ENCODE measurements at regions of chr11 and their contacts with region 1.

Region 1: GRCh38 chr11:61061081-61061826 is 41.0 kb upstream of the CD5 start:
- DNase-seq: peak; percentile 97
- H3K4me3 Mint-ChIP-seq: peak overlapping the region; percentile 70
- H3K27ac Mint-ChIP-seq: peak overlapping the region; percentile 100
- H3K4me1 Mint-ChIP-seq: peaks cover 88% of the 10 kb centered on the region
- H3K27me3 Mint-ChIP-seq: no peaks in the 10 kb centered on the region

Region 2: GRCh38 chr11:60970369-60970774 is 90.9 kb before region 1 on chr11:
- CTCF ChIA-PET with region 1: interaction called, 5 read pairs
- intact Hi-C with region 1: loop called (anchors 1 kb)
- DNase-seq: peak; percentile 90
- H3K4me3 Mint-ChIP-seq: peak overlapping the region; percentile 89
- H3K27ac Mint-ChIP-seq: peak overlapping the region; percentile 97
- H3K4me1 Mint-ChIP-seq: peaks cover 15% of the 10 kb centered on the region
- H3K27me3 Mint-ChIP-seq: no peaks in the 10 kb centered on the region

Region 3: GRCh38 chr11:60992842-60993409 is 68.3 kb before region 1 on chr11:
- CTCF ChIA-PET with region 1: interaction called, 4 read pairs
- intact Hi-C with region 1: loop called (anchors 1 kb)
- DNase-seq: no peak
- H3K4me3 Mint-ChIP-seq: peak overlapping the region; percentile 74
- H3K27ac Mint-ChIP-seq: peak overlapping the region; percentile 98
- H3K4me1 Mint-ChIP-seq: peaks cover 81% of the 10 kb centered on the region
- H3K27me3 Mint-ChIP-seq: no peaks in the 10 kb centered on the region

Region 4: DNA sequence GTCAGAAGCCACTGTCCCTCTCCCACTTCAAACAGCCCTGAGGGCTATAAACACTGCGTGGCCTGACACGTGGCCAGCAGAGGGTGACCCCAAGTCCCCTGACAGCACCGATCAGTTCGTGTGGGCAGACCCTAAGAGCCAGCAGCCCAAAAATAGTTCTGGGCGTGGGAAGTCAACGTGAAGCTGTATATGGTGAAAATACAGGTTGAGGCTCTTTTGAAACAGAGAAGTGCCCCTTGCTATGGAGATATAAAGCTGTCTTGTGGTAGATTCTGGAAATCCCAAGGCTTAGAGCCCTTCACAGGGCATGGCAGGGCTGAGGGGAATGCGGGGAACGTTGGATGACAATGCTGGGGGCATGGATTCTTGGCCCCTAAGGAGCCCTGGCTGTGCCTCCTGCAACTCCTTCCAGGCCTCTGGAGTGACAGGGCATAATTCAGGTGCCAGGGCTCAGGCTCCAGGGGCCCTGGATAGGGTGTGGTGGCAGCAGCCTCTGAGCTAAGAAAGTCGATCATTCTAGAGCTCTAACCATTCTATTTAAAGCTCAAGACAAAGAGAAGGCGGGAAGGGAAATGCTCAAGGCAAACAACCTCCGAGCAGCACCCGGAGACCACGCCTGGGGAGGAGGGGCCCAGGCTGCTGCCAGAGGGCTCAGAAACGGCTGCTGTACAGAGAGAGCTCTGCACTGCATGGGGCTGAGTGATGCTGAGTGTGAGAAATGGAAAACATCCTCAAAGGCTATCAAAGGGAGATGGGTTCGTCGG is 19.3 kb before region 1 on chr11:
- CTCF ChIA-PET with region 1: interaction called, 5 read pairs
- intact Hi-C with region 1: loop called (anchors 1 kb)
- DNase-seq: peak; percentile 93
- H3K4me3 Mint-ChIP-seq: peak overlapping the region; percentile 44
- H3K27ac Mint-ChIP-seq: peak overlapping the region; percentile 97
- H3K4me1 Mint-ChIP-seq: peaks cover 70% of the 10 kb centered on the region
- H3K27me3 Mint-ChIP-seq: no peaks in the 10 kb centered on the region

Region 5: DNA sequence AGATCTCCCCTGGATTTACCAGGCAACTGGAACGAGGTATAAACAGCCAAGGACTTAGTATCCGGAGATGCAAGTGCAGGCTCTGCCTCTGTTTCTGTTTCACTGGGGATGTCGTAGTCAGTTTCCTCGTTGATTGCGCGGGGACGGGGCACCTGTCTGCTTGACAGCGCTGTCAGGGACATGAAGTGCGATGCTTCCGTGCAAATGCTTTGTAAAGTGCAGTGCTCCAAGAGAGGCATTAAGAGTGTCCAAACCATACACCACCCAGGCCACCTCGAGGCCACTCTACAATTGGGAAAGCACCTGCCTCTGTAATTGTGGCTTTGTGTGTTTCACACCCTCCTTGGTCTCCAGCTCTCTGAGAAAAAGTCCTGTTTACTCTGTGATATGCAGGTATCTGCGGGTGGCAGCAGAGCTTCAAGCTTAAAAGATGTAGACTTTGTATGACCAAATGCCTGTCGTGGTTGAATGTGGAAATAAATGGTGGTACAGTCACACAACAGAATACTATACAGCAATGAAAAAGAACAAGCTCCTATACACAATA is 22.4 kb after region 1 on chr11:
- CTCF ChIA-PET with region 1: interaction called, 21 read pairs
- intact Hi-C with region 1: loop called (anchors 1 kb)
- DNase-seq: peak; percentile 89
- H3K4me3 Mint-ChIP-seq: peak overlapping the region; percentile 76
- H3K27ac Mint-ChIP-seq: peak overlapping the region; percentile 99
- H3K4me1 Mint-ChIP-seq: peaks cover 70% of the 10 kb centered on the region
- H3K27me3 Mint-ChIP-seq: no peaks in the 10 kb centered on the region

Region 6: DNA sequence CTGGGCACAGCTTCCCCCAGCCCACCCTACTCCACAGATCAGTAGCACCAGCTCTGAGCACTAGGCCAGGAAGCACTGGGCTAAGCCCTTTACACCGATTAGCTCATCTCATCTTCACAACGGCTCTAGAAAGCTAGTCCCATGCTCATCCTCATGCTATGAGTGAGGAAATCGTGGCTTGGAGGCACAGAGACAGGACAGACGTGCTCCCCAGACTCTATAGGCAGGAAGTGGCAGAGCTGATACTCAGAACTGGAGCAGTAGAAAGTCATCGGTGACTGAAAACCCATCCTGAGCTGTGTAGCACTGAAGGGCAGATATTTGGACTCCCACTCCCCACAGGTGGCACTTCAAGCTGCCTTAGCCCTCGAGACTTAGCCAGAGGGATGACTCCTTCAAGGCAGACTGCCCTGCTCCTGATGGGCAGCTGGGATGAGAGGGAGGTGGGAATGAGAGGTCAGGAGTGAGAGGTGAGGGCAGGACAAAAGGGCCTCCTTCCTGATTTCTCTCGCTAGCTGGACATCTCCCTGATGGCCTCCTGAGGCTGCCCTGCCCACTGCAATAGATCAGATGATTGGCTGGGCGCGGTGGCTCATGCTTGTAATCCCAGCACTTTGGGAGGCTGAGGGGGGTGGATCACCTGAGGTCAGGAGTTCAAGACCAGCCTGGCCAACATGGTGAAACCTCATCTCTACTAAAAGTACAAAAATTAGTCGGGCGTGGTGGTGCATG is 50.7 kb after region 1 on chr11:
- CTCF ChIA-PET with region 1: interaction called, 7 read pairs
- intact Hi-C with region 1: loop called (anchors 1 kb)
- DNase-seq: peak; percentile 91
- H3K4me3 Mint-ChIP-seq: peak overlapping the region; percentile 71
- H3K27ac Mint-ChIP-seq: no peak overlapping the region
- H3K4me1 Mint-ChIP-seq: peaks cover 99% of the 10 kb centered on the region
- H3K27me3 Mint-ChIP-seq: no peaks in the 10 kb centered on the region

Region 7: DNA sequence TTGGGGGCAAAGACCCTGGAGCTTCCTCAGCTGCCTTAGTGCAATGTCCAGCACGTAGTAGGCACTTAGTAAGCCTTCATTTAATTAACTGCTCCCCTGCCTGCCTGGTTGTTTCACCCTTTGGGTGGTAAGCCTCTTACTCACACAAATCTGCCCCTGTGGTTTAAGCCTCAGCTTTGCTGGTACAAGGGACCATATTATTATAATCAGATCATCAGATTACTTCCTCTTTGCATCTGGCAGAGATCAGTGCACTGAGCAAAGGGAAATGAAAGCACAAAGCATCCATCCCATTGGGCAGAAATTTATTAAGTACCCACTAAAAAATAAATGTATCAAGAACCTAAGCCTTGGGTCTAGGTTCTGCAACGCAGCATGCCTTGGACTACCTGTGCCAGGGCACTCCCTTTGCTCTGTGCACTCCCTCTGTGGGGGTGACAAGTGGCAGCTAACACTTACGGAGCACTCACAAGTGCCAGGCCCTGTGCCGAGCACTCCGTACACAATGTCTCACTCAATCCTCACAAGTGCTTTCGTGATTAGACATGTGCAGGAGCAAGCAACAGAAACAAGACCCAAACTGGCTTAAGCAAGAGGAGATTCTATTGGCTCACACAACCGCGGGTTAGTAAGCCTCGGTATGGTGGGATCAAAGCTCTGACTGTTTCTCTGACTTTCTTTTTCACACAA is 584.1 kb after region 1 on chr11:
- CTCF ChIA-PET with region 1: no interaction called
- intact Hi-C with region 1: no loop called
- DNase-seq: no peak
- H3K4me3 Mint-ChIP-seq: no peak overlapping the region
- H3K27ac Mint-ChIP-seq: no peak overlapping the region
- H3K4me1 Mint-ChIP-seq: no peaks in the 10 kb centered on the region
- H3K27me3 Mint-ChIP-seq: no peaks in the 10 kb centered on the region

Measured in activated naive CD4-positive, alpha-beta T cell treated with anti-CD3 and anti-CD28 coated beads for 36 hours (primary cell).